A549 (cell line): ENCODE measurements at regions of chr3 and their contacts with region 1.

Region 1: DNA sequence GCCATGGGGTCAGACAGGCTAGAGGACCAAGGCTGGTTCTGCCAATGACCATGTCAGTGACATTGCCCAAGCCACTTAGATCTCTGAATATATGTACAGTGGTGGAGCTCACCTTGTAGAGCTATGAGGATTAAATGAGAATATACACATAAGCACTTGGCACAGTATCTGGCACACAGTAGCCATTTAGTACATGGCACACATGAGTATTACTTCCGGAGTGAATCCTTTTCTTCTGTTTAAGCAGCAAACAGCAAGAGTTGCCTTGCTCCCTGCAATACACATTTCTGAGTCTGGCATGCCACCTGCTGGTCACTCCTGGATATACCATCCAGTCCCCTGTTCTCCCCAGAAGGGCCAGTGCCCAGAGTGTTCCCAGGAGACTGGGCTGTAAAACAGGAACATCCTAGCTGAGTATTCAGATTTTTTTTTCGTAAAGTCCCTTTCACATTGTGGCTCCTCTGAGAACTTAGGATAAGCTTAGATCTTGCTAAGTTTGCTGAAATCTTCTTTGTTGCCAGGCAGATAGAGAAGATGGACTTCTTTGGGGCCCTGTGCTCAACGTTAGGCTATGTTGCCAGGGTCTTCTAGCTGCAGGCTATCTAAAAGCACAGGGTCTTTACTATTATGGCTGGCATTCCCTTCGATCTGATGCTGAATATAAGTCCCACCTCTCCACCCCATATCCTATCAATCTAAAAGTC is 203.4 kb downstream of the ADAMTS9 start:
- DNase-seq: peak; percentile 51 to 75
- ATAC-seq: peak; percentile 99
- H3K4me3 ChIP-seq: no peak overlapping the region
- H3K27ac ChIP-seq: peak overlapping the region; percentile 63 to 74
- H3K4me1 ChIP-seq: no peaks in the 10 kb centered on the region
- CTCF ChIP-seq: peak; percentile 86
- EP300 ChIP-seq: no peak
- POLR2A ChIP-seq: no peak
- RAD21 ChIP-seq: peak; percentile 91 to 95

Region 2: GRCh38 chr3:63998852-63999754 is 485.3 kb before region 1 on chr3:
- CTCF ChIA-PET with region 1: interaction called, 13 read pairs
- POLR2A ChIA-PET with region 1: no interaction called
- DNase-seq: no peak
- ATAC-seq: no peak
- H3K4me3 ChIP-seq: no peak overlapping the region
- H3K27ac ChIP-seq: no peak overlapping the region
- H3K4me1 ChIP-seq: no peaks in the 10 kb centered on the region
- CTCF ChIP-seq: no peak
- EP300 ChIP-seq: no peak
- POLR2A ChIP-seq: no peak
- RAD21 ChIP-seq: no peak

Region 3: DNA sequence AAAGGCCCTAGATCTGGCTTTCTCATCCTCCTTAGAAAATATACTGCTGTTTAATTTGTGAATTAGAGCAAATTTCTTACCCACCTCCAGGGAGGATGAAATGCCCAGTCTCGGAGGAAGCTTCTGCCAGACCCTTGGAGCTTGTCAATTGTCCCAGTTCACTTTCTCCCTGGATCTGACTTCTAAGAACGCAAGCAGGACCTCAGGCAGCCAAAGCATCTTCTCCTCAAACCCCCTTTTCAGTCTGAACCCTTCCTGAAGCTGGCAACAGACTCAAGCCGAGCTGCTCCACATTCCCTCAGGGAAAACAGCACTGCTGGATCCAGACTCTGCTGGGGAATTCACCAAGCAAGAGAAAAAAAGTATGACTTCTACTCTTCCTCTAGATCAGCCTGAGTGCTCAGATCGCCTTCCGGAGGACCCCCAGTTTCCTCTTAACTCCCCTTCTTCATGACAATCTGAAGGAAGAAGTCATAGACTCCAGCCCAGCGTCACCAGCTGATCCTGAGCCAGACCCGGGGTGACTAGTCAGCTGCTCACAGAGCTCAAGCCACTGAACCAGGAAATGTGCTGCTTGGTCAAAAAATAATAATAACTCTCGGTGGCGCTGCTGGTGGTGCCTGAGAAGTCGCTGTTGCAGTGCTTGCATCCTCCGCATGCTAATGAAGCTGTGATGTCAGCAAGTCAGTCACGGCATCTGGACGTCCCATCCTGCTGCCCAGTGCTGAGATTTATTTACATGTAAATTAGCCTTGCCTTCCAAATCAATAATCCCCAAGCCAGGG is 259.4 kb before region 1 on chr3 and contains the start of gene PRICKLE2:
- CTCF ChIA-PET with region 1: interaction called, 41 read pairs
- POLR2A ChIA-PET with region 1: no interaction called
- DNase-seq: peak; percentile 69 to 90
- ATAC-seq: peak; percentile 88 to 92
- H3K4me3 ChIP-seq: peak within 1 kb of the TSS; percentile 70
- H3K27ac ChIP-seq: peak within 1 kb of the TSS; percentile 91 to 93
- H3K4me1 ChIP-seq: peaks cover 33% of the 10 kb centered on the region
- CTCF ChIP-seq: peak; percentile 37
- EP300 ChIP-seq: no peak
- POLR2A ChIP-seq: peak; percentile 19; the same call in 1 of the 2 replicates
- RAD21 ChIP-seq: peak; percentile 54 to 64
- polyA plus RNA-seq, gene PRICKLE2: 6.3 and 8.0 TPM in 2 replicates

Region 4: DNA sequence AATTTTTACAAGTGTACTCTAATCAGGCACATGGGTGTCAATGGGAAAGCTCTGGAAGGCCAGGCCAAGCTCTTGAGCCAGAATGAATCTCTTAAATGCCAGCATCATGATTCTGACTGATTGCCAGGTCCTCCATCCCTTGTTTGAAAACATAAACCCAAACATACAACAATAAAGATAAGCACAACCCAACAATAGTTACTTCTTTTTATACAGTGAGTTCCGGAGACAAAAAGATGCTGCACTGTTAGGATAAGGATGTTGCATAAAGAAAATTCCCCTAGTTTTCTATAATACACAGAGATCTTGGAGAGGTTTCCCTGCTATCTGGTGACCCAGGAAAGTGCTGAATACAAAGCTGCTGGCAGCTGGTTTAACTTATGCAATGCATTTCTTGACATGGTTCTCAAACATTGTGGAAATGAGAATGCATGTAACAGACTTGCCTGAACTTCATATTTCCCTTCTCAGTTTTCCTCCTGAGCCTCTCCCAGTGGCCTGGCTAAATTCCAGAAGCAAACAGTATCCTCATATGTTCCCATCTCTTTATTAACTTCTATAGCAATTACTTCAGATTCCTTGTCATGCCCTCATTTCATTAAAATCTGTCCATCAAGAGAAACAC is 79.1 kb before region 1 on chr3:
- CTCF ChIA-PET with region 1: interaction called, 11 read pairs
- POLR2A ChIA-PET with region 1: no interaction called
- DNase-seq: no peak
- ATAC-seq: no peak
- H3K4me3 ChIP-seq: no peak overlapping the region
- H3K27ac ChIP-seq: no peak overlapping the region
- H3K4me1 ChIP-seq: no peaks in the 10 kb centered on the region
- CTCF ChIP-seq: no peak
- EP300 ChIP-seq: no peak
- POLR2A ChIP-seq: no peak
- RAD21 ChIP-seq: no peak

Region 5: GRCh38 chr3:64467255-64467944 is 17.0 kb before region 1 on chr3:
- CTCF ChIA-PET with region 1: interaction called, 12 read pairs
- POLR2A ChIA-PET with region 1: no interaction called
- DNase-seq: no peak
- ATAC-seq: no peak
- H3K4me3 ChIP-seq: no peak overlapping the region
- H3K27ac ChIP-seq: no peak overlapping the region
- H3K4me1 ChIP-seq: no peaks in the 10 kb centered on the region
- CTCF ChIP-seq: no peak
- EP300 ChIP-seq: no peak
- POLR2A ChIP-seq: no peak
- RAD21 ChIP-seq: no peak

Region 6: DNA sequence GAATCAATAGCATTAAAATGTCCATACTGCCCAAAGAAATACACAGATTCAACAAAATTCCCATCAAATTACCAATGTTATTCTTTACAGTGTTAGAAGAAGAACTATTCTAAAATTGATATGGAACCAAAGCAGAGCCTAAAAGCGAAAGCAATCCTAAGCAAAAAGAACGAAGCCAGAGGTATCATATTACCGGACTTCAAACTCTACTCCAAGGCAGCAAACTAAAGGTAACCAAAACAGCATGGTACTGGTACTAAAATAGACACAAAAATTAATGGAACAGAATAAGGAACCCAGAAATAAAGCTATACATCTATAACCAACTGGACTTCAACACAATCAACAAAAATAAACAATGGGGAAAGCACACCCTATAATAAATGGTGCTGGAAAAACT is 35.9 kb after region 1 on chr3:
- CTCF ChIA-PET with region 1: no interaction called
- POLR2A ChIA-PET with region 1: no interaction called
- DNase-seq: no peak
- ATAC-seq: no peak
- H3K4me3 ChIP-seq: no peak overlapping the region
- H3K27ac ChIP-seq: no peak overlapping the region
- H3K4me1 ChIP-seq: no peaks in the 10 kb centered on the region
- CTCF ChIP-seq: no peak
- EP300 ChIP-seq: no peak
- POLR2A ChIP-seq: no peak
- RAD21 ChIP-seq: no peak